Activated CD4-positive, alpha-beta memory T cell treated with anti-CD3 and anti-CD28 coated beads, Interleukin-2, amount 10 ng/mL, durations not matched to agents 7 days and 5 days (primary cell): ENCODE measurements at regions of chr10 and their contacts with region 1.

Region 1: GRCh38 chr10:113802997-113803396 is 50.9 kb downstream of the DCLRE1A start:
- DNase-seq: no peak
- H3K4me3 Mint-ChIP-seq: no peak overlapping the region
- H3K27ac Mint-ChIP-seq: no peak overlapping the region
- H3K4me1 Mint-ChIP-seq: no peaks in the 10 kb centered on the region
- H3K27me3 Mint-ChIP-seq: peaks cover 36% of the 10 kb centered on the region

Region 2: GRCh38 chr10:113891476-113891875 is 88.5 kb after region 1 on chr10:
- CTCF ChIA-PET with region 1: no interaction called
- POLR2A ChIA-PET with region 1: no interaction called
- DNase-seq: no peak
- H3K4me3 Mint-ChIP-seq: no peak overlapping the region
- H3K27ac Mint-ChIP-seq: no peak overlapping the region
- H3K4me1 Mint-ChIP-seq: no peaks in the 10 kb centered on the region
- H3K27me3 Mint-ChIP-seq: no peaks in the 10 kb centered on the region

Region 3: GRCh38 chr10:114083040-114083439 is 280.0 kb after region 1 on chr10:
- CTCF ChIA-PET with region 1: no interaction called
- POLR2A ChIA-PET with region 1: no interaction called
- DNase-seq: peak; percentile 31
- H3K4me3 Mint-ChIP-seq: no peak overlapping the region
- H3K27ac Mint-ChIP-seq: no peak overlapping the region
- H3K4me1 Mint-ChIP-seq: no peaks in the 10 kb centered on the region
- H3K27me3 Mint-ChIP-seq: peaks cover 23% of the 10 kb centered on the region

Region 4: DNA sequence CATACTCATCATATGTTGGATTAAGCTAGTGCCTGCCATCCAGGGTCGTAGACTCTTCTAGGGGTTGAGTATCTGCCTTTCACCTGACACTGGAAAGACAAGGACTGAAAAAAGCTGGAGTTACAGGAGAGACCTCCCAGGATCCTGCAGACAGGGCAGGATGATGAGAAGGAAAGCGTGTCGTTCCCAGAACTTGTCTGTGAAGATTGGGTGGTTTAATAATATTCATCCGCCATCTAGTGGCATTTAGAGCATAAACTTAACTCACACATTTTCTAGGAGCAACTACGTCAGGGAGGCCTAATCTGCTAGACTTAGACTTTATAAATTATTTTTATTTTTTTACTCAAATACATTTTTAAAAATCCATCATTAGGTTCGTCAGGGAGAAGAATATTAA is 300.3 kb after region 1 on chr10:
- CTCF ChIA-PET with region 1: interaction called, 91 read pairs
- POLR2A ChIA-PET with region 1: no interaction called
- DNase-seq: no peak
- H3K4me3 Mint-ChIP-seq: no peak overlapping the region
- H3K27ac Mint-ChIP-seq: no peak overlapping the region
- H3K4me1 Mint-ChIP-seq: peaks cover 36% of the 10 kb centered on the region
- H3K27me3 Mint-ChIP-seq: peaks cover 29% of the 10 kb centered on the region